MCF 10A (cell line): ENCODE measurements at regions of chr4 and their contacts with region 1.

Region 1: DNA sequence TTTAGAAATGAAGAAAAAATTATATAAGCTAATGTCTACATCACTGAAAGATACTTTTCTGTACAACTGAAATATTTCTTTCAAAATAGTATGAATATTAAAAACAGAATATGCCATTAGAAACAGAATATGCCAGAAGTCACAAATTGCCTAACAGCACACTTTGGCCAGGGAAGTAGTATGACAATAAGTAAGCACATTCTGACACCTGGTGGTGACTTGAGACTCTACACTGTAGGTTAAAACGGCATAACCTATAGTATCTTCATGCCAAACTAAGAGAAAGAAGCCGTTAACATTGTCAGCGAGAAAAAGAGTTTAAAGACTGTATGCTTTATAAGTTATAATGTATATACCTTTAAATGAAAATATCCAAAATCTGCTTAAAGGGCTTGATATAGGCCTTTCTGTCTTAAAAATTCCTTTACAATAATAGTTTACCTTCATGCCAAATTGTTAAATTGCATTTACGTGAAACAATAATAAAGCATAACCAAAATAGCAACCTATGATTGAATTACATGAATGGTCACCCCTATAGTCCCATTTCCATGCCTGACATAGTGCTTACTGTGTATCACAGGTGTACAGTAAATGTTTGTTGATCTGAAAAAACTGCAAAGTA is 32.8 kb downstream of the FAM13A start:
- DNase-seq: peak; percentile 86
- H3K4me3 Mint-ChIP-seq: no peak overlapping the region
- H3K27ac Mint-ChIP-seq: peak overlapping the region; percentile 35
- H3K4me1 Mint-ChIP-seq: no peaks in the 10 kb centered on the region
- H3K27me3 Mint-ChIP-seq: no peaks in the 10 kb centered on the region
- CTCF ChIP-seq: peak; percentile 67

Region 2: GRCh38 chr4:88528861-88529260 is 495.3 kb before region 1 on chr4:
- CTCF ChIA-PET with region 1: interaction called, 7 read pairs
- POLR2A ChIA-PET with region 1: no interaction called
- intact Hi-C with region 1: loop called (anchors 1 kb)
- DNase-seq: peak; percentile 16
- H3K4me3 Mint-ChIP-seq: no peak overlapping the region
- H3K27ac Mint-ChIP-seq: no peak overlapping the region
- H3K4me1 Mint-ChIP-seq: peaks cover 9% of the 10 kb centered on the region
- H3K27me3 Mint-ChIP-seq: no peaks in the 10 kb centered on the region
- CTCF ChIP-seq: peak; percentile 12

Region 3: GRCh38 chr4:88672987-88673386 is 351.2 kb before region 1 on chr4:
- CTCF ChIA-PET with region 1: interaction called, 4 read pairs
- POLR2A ChIA-PET with region 1: no interaction called
- intact Hi-C with region 1: loop called (anchors 5 kb)
- DNase-seq: peak; percentile 33
- H3K4me3 Mint-ChIP-seq: no peak overlapping the region
- H3K27ac Mint-ChIP-seq: no peak overlapping the region
- H3K4me1 Mint-ChIP-seq: no peaks in the 10 kb centered on the region
- H3K27me3 Mint-ChIP-seq: no peaks in the 10 kb centered on the region
- CTCF ChIP-seq: peak; percentile 21

Region 4: GRCh38 chr4:88938135-88938534 is 86.0 kb before region 1 on chr4:
- CTCF ChIA-PET with region 1: interaction called, 9 read pairs
- POLR2A ChIA-PET with region 1: interaction called, 10 read pairs
- intact Hi-C with region 1: loop called (anchors 1 kb)
- DNase-seq: peak; percentile 94
- H3K4me3 Mint-ChIP-seq: peak overlapping the region; percentile 5
- H3K27ac Mint-ChIP-seq: peak overlapping the region; percentile 94
- H3K4me1 Mint-ChIP-seq: peaks cover 12% of the 10 kb centered on the region
- H3K27me3 Mint-ChIP-seq: no peaks in the 10 kb centered on the region
- CTCF ChIP-seq: no peak

Region 5: DNA sequence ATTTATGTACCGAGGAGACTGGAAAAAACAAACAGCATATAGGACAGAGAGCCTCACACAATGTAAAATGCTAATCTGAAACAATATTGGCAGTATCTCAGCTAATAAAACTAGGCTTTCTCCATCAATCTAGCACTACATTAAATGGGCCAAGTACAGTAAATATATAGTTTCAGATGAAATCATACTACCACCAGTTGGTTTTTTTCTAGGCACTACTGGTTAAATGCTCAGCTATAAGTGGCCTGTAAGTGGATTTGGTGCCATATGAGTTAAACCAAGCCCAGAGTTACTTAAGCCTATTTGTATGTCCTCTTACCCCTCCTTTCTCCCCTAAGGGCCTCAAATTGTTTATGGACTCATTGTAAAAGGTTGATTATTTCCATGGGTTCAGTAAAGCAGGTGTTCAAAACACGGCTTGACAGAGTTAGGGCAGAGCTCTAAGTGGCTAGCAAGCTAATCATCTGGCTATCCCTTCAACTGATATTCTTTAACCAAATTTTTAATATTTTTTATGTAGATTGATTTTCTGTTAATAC is 24.7 kb before region 1 on chr4:
- CTCF ChIA-PET with region 1: interaction called, 13 read pairs
- POLR2A ChIA-PET with region 1: no interaction called
- intact Hi-C with region 1: no loop called
- DNase-seq: no peak
- H3K4me3 Mint-ChIP-seq: no peak overlapping the region
- H3K27ac Mint-ChIP-seq: no peak overlapping the region
- H3K4me1 Mint-ChIP-seq: peaks cover 15% of the 10 kb centered on the region
- H3K27me3 Mint-ChIP-seq: no peaks in the 10 kb centered on the region
- CTCF ChIP-seq: no peak

Region 6: GRCh38 chr4:89009115-89009514 is 15.0 kb before region 1 on chr4:
- CTCF ChIA-PET with region 1: interaction called, 14 read pairs
- POLR2A ChIA-PET with region 1: interaction called, 3 read pairs
- intact Hi-C with region 1: no loop called
- DNase-seq: no peak
- H3K4me3 Mint-ChIP-seq: no peak overlapping the region
- H3K27ac Mint-ChIP-seq: no peak overlapping the region
- H3K4me1 Mint-ChIP-seq: peaks cover 23% of the 10 kb centered on the region
- H3K27me3 Mint-ChIP-seq: no peaks in the 10 kb centered on the region
- CTCF ChIP-seq: no peak